CD8-positive, alpha-beta memory T cell (primary cell): ENCODE measurements at regions of chr9 and their contacts with region 1.

Region 1: GRCh38 chr9:113511856-113512761 is 48.6 kb downstream of the RGS3 start:
- DNase-seq: peak; percentile 62 to 89 (median 69)
- H3K4me3 ChIP-seq: peak overlapping the region; percentile 39
- H3K4me3 Mint-ChIP-seq: peak overlapping the region; percentile 39 to 76 (median 73)
- H3K27ac ChIP-seq: peak overlapping the region; percentile 43
- H3K27ac Mint-ChIP-seq: peak overlapping the region; percentile 89 to 98 (median 94)
- H3K4me1 ChIP-seq: peaks cover 64% of the 10 kb centered on the region
- H3K4me1 Mint-ChIP-seq: peaks cover 60 to 72% (median 64%) of the 10 kb centered on the region in 3 donors
- H3K27me3 ChIP-seq: no peaks in the 10 kb centered on the region
- H3K27me3 Mint-ChIP-seq: peaks cover 0 to 1% of the 10 kb centered on the region in 2 donors

Region 2: GRCh38 chr9:113454914-113455761 is 57.0 kb before region 1 on chr9:
- CTCF ChIA-PET with region 1: no interaction called
- POLR2A ChIA-PET with region 1: no interaction called
- DNase-seq: no peak
- H3K4me3 ChIP-seq: no peak overlapping the region
- H3K4me3 Mint-ChIP-seq: no peak overlapping the region
- H3K27ac ChIP-seq: no peak overlapping the region
- H3K27ac Mint-ChIP-seq: peak overlapping the region in 4 of 8 donors; percentile 35 to 96 (median 56)
- H3K4me1 ChIP-seq: no peaks in the 10 kb centered on the region
- H3K4me1 Mint-ChIP-seq: peaks cover 1 to 8% (median 8%) of the 10 kb centered on the region in 3 donors
- H3K27me3 ChIP-seq: no peaks in the 10 kb centered on the region
- H3K27me3 Mint-ChIP-seq: peaks cover 0 to 1% of the 10 kb centered on the region in 2 donors

Region 3: DNA sequence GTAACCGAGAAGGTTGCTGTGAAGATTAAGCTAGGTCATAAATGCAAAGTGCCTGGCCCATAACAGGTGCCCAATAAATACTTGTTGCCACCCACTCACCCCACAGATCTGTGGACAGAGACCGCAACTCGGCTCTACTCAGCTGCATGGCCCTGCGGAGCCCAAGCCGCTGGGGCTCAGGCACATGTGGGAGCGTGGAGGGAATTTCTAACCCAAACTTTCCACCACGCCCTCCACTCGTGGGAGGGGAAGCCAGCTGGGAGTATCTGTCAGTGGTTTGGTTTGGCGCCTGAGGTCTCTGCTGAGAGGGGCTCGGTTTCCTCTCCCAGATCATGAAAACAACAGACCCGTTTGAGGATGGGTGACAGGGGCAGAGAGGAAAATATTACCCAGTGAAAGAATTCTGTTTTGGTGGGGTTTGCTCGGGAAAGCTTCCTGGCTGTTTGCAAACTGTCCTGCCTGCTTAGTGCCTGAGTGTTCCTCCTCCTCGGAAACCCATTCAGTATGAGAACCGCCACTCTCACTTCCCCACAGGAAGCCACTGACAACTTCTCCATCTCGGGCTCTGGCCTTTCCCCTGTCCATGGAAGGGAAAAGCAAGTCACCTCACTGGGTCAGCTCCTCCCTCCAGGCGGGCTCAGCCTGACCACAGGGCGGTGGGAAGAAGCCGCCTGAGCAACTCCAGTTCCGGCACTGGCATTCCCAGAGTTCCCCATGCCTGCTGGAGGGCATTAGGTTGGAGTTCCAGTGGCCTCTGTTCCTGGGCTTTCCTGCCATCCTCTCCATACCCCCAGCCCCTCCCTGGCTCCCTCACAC is 11.5 kb after region 1 on chr9:
- CTCF ChIA-PET with region 1: interaction called, 3 read pairs
- POLR2A ChIA-PET with region 1: interaction called, 12 read pairs
- DNase-seq: peak; percentile 54 to 75 (median 57)
- H3K4me3 ChIP-seq: peak overlapping the region; percentile 33
- H3K4me3 Mint-ChIP-seq: peak overlapping the region; percentile 72 to 91 (median 82)
- H3K27ac ChIP-seq: no peak overlapping the region
- H3K27ac Mint-ChIP-seq: peak overlapping the region; percentile 84 to 97 (median 91)
- H3K4me1 ChIP-seq: peaks cover 79% of the 10 kb centered on the region
- H3K4me1 Mint-ChIP-seq: peaks cover 91 to 100% (median 97%) of the 10 kb centered on the region in 3 donors
- H3K27me3 ChIP-seq: no peaks in the 10 kb centered on the region
- H3K27me3 Mint-ChIP-seq: no peaks in the 10 kb centered on the region

Region 4: DNA sequence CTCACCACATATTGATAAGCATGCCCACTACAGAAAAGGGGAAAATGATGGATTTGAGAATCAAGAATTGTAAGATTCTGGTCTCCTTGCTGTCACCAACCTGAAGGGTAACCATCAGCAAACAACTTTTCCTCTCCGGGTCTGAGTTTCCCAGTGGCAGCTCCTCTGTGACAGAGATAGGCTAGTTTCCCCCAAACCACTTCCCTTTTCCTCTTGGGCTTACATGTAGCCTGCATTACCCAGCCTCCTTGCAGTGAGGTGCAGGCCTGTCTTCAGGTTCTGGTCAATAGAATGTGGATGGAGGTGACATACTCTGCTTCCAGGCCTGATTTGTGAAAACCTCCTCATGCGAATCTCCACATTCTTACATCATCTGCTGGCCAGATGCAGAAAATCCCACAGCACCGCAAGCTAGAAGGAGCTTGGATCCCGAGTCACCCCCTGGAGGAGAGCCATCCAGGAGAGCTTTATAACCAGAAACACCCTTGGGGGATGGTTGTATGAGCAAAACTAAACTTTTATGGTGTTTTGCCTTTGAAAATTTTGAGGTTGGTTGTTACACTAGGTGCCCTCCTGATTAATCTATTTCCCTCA is 157.5 kb after region 1 on chr9:
- CTCF ChIA-PET with region 1: no interaction called
- POLR2A ChIA-PET with region 1: no interaction called
- DNase-seq: no peak
- H3K4me3 ChIP-seq: no peak overlapping the region
- H3K4me3 Mint-ChIP-seq: no peak overlapping the region
- H3K27ac ChIP-seq: no peak overlapping the region
- H3K27ac Mint-ChIP-seq: no peak overlapping the region
- H3K4me1 ChIP-seq: no peaks in the 10 kb centered on the region
- H3K4me1 Mint-ChIP-seq: no peaks in the 10 kb centered on the region
- H3K27me3 ChIP-seq: no peaks in the 10 kb centered on the region
- H3K27me3 Mint-ChIP-seq: peaks cover 14 to 21% of the 10 kb centered on the region in 2 donors